ENCODE measurements at regions of chr6 and their contacts with region 1.

Region 1: DNA sequence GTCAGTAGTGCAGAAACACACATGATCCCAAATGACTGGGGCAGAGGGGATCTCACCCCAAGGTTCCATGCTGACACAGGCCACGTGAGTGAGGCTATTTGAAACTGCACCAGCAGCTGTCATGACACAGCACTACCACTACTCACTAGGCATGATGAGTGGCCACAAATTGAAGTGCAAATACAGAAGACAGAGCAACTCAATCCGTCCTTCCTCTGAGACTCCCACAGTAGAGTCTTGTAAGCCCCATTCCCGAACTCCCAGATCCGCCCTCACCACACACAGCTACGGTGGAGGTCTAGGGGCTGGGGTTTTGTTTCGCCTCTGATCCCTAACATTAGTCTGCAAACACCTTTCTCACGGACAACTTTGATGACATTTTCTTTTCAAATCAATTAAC is 113.3 kb upstream of the NUP153 start:
- DNase-seq: no peak
- H3K4me3 ChIP-seq: no peak overlapping the region
- CTCF ChIP-seq: no peak

Region 2: DNA sequence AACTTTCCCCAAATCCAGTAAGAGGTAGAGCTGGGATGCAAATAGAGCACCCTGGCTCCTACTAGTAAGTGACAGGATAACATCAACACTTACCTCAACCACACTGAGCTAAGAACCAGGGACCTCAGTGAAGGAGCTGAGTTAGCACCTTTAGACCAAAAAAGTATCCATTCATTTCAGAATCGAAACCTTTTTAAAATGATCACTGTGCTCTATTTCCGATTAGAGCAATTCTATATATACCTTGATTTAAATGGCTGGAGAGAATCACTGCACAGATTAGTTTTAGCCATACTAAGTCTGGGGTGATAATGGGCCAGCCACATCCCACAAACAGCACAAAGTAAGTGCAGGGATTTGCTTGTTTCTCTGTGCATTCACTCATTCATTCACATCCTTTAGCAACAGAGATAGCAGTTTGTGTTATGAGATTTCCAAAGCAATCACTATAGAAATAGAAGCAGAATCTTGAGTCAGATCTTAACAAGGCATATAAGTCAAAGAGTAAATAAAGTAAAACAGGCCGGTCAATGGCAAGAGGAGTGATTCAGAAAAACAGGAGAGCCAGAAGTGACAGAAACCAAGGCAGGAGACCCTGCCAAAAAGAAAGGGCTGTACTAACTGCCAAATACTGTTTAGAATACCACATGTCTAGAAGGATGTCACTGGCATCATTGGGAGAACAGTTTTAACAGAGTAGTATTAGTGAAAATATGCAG is 31.1 kb after region 1 on chr6:
- CTCF ChIA-PET with region 1: interaction called, 11 read pairs
- POLR2A ChIA-PET with region 1: no interaction called
- DNase-seq: no peak
- H3K4me3 ChIP-seq: no peak overlapping the region
- CTCF ChIP-seq: no peak

Measured in AG04449 (cell line).